ENCODE measurements at regions of chr20 and their contacts with region 1.

Region 1: GRCh38 chr20:39986173-39986904 is 702.7 kb downstream of the MAFB start:
- DNase-seq: peak; percentile 92
- H3K4me3 ChIP-seq: no peak overlapping the region
- H3K27ac ChIP-seq: peak overlapping the region; percentile 66 to 86 (median 83)
- H3K4me1 ChIP-seq: peaks cover 0 to 33% (median 27%) of the 10 kb centered on the region in 4 donors
- H3K27me3 ChIP-seq: no peaks in the 10 kb centered on the region
- CTCF ChIP-seq: no peak
- EP300 ChIP-seq: peak in 3 of 4 donors; percentile 26 to 71 (median 44)
- POLR2A ChIP-seq: no peak

Region 2: GRCh38 chr20:39885975-39886649 is 100.2 kb before region 1 on chr20:
- intact Hi-C with region 1: loop called (anchors 5 kb)
- DNase-seq: peak; percentile 82
- H3K4me3 ChIP-seq: no peak overlapping the region
- H3K27ac ChIP-seq: peak overlapping the region in 1 of 4 donors; percentile 16
- H3K4me1 ChIP-seq: no peaks in the 10 kb centered on the region
- H3K27me3 ChIP-seq: no peaks in the 10 kb centered on the region
- CTCF ChIP-seq: peak in 3 of 4 experiments; percentile 42 to 57 (median 51)
- EP300 ChIP-seq: no peak
- POLR2A ChIP-seq: no peak

Region 3: GRCh38 chr20:40046703-40047102 is 60.4 kb after region 1 on chr20:
- intact Hi-C with region 1: no loop called
- DNase-seq: no peak
- H3K4me3 ChIP-seq: no peak overlapping the region
- H3K27ac ChIP-seq: no peak overlapping the region
- H3K4me1 ChIP-seq: no peaks in the 10 kb centered on the region
- H3K27me3 ChIP-seq: no peaks in the 10 kb centered on the region
- CTCF ChIP-seq: no peak
- EP300 ChIP-seq: no peak
- POLR2A ChIP-seq: no peak

Region 4: DNA sequence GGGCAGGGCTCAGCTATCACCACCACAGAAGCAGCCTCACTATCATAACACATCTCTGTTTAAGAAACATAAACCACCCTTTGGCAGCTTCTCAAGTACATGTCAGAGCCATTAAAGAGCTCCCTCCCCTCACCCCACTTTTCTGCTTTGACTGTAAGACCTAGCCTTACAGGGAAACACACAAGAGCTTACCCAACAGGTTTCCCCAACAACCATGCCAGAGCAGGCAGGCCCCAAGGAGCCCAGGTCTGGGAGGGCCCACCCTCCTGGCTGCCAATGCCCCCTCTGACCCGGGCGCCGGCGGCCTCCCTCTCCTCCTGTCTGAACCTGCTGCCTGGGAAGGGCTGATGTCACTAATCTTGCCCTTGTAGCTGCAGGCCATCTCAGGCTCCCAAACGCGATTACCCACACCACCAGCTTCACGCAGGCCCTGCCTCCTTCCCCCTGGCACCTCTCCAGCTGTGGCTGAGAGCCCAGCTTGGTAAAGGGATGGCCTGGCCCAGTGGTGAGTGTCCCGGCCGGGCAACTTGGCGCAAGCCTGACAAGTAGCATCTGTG is 300.7 kb after region 1 on chr20:
- intact Hi-C with region 1: loop called (anchors 5 kb)
- DNase-seq: peak; percentile 89
- H3K4me3 ChIP-seq: no peak overlapping the region
- H3K27ac ChIP-seq: peak overlapping the region in 3 of 4 donors; percentile 61 to 77 (median 67)
- H3K4me1 ChIP-seq: peaks cover 0 to 25% (median 19%) of the 10 kb centered on the region in 4 donors
- H3K27me3 ChIP-seq: no peaks in the 10 kb centered on the region
- CTCF ChIP-seq: no peak
- EP300 ChIP-seq: no peak
- POLR2A ChIP-seq: no peak

Region 5: GRCh38 chr20:40563296-40563944 is 577.1 kb after region 1 on chr20:
- intact Hi-C with region 1: no loop called
- DNase-seq: no peak
- H3K4me3 ChIP-seq: no peak overlapping the region
- H3K27ac ChIP-seq: no peak overlapping the region
- H3K4me1 ChIP-seq: peaks cover 0 to 35% (median 27%) of the 10 kb centered on the region in 4 donors
- H3K27me3 ChIP-seq: no peaks in the 10 kb centered on the region
- CTCF ChIP-seq: no peak
- EP300 ChIP-seq: no peak
- POLR2A ChIP-seq: no peak